Motor neuron (in vitro differentiated cells): ENCODE measurements at regions of chr1 and their contacts with region 1.

Region 1: DNA sequence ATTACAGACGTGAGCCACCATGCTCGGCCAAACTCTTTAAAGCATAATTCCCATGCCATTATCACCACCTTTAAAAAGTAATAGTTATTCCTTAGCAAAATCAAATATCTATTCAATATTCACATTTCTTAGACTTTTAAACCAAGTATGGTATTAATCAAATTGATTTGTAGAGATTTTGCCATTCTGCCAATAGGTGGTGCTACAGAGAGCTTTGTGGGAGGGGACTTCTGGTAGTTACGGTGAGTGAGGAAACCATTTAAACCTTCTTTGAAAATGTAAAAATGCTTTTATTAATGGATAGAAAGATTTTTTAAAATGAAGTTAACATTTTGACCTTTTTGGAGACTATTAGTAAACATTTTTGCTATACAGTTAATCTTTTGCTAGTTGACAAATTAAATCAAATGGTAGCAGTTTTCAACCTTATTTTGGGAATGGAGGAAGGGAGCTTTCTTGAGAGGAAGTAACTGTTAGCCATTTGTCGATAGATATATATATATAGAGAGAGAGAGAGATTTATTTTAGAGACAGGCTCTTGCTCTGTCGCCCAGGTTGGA is 19.3 kb downstream of the IARS2 start:
- ATAC-seq: peak in 2 of 8 experiments; percentile 17 to 33
- H3K4me3 ChIP-seq: no peak overlapping the region
- H3K27ac ChIP-seq: no peak overlapping the region
- H3K4me1 ChIP-seq: no peaks in the 10 kb centered on the region

Region 2: DNA sequence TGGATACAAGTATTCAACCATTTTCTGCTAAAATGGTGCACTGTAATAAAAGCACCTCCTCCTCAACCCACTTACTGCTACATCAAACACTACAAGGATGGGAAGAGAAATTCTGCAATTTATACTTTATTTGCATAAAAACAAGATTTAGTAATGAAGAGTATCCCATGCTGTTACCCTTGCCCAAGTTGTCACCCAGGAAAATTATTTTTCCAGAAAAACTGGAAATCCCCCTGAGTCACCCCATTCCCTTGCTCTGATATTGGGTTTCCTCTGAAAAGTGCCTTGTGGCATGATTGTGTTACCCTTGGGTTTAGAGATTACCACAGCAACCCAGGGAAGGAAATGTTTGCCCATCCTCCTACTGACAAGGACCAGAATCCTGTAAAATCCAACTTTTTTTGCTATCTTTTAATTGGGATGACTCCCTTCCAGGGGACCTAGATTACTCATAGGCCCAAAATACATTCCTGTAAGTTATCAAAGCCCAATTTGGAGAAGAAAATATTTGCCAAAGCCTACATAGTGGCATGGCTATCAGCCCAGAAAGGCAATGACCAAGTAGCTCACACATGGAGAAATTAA is 483.8 kb before region 1 on chr1:
- in situ Hi-C with region 1: no loop called
- ATAC-seq: no peak
- H3K4me3 ChIP-seq: no peak overlapping the region
- H3K27ac ChIP-seq: no peak overlapping the region
- H3K4me1 ChIP-seq: no peaks in the 10 kb centered on the region

Region 3: DNA sequence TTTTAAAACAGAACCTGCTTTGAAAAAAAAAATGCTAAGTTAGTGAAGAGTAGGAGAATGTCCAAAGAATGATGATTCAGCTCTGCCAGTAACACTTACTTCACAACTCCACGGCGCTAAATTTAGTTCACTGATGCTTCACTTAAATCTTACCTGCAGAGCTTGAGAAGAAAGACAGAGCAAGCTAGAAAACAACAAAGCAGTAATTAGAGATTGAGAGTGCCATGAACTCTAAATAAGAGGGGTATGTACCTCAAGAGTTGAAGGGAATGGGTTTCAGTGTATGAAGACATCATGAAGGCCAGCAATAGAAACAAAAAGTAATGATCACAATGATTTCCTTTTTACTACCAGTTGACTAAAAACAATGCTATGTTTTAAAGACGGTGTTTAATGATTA is 99.7 kb before region 1 on chr1:
- in situ Hi-C with region 1: loop called in 1 of 9 experiments (anchors 25 kb)
- ATAC-seq: peak in 2 of 8 experiments; percentile 28 to 60
- H3K4me3 ChIP-seq: no peak overlapping the region
- H3K27ac ChIP-seq: no peak overlapping the region
- H3K4me1 ChIP-seq: no peaks in the 10 kb centered on the region